Endothelial cell of umbilical vein (primary cell): ENCODE measurements at regions of chr10 and their contacts with region 1.

Region 1: GRCh38 chr10:95693668-95694534 is at the start of gene TCTN3:
- DNase-seq: peak; percentile 100
- H3K4me3 ChIP-seq: peak within 1 kb of the TSS; percentile 48 to 83 (median 68)
- H3K27ac ChIP-seq: peak within 1 kb of the TSS; percentile 26
- H3K4me1 ChIP-seq: peaks cover 13% of the 10 kb centered on the region
- H3K27me3 ChIP-seq: no peaks in the 10 kb centered on the region
- CTCF ChIP-seq: peak; percentile 99 to 100
- POLR2A ChIP-seq: peak; percentile 67
- total RNA-seq, gene TCTN3: 40.4 and 42.9 TPM in 2 replicates

Region 2: GRCh38 chr10:95374597-95375209 is 319.2 kb before region 1 on chr10:
- CTCF ChIA-PET with region 1: interaction called, 20 read pairs
- POLR2A ChIA-PET with region 1: no interaction called
- dilution Hi-C with region 1: no loop called
- intact Hi-C with region 1: loop called (anchors 1 kb)
- DNase-seq: peak; percentile 50
- H3K4me3 ChIP-seq: no peak overlapping the region
- H3K27ac ChIP-seq: no peak overlapping the region
- H3K4me1 ChIP-seq: no peaks in the 10 kb centered on the region
- H3K27me3 ChIP-seq: peaks cover 0 to 7% of the 10 kb centered on the region in 2 experiments
- CTCF ChIP-seq: peak; percentile 83 to 91
- POLR2A ChIP-seq: no peak

Region 3: DNA sequence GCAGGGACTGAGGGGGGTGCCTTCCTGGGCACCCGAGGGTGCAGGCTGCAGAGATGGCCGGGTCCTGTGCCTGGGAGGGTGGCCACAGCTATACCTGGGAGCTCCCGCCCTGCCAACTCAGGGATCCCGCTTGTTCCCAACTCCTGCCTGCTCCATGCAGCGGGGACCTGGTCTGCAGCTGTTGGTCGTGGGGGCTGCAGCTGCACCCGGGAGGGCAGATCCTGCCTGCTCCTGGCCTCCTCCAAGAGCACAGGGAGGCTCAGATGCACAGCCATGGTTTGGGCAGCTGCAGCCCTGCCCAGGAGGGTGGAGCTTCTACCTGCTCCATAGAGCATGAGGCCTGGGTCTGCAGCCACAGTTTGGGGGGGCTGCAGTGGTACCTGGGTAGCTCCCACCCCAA is 13.1 kb after region 1 on chr10:
- CTCF ChIA-PET with region 1: interaction called, 33 read pairs
- POLR2A ChIA-PET with region 1: no interaction called
- dilution Hi-C with region 1: no loop called
- intact Hi-C with region 1: no loop called
- DNase-seq: no peak
- H3K4me3 ChIP-seq: no peak overlapping the region
- H3K27ac ChIP-seq: no peak overlapping the region
- H3K4me1 ChIP-seq: no peaks in the 10 kb centered on the region
- H3K27me3 ChIP-seq: no peaks in the 10 kb centered on the region
- CTCF ChIP-seq: no peak
- POLR2A ChIP-seq: no peak

Region 4: DNA sequence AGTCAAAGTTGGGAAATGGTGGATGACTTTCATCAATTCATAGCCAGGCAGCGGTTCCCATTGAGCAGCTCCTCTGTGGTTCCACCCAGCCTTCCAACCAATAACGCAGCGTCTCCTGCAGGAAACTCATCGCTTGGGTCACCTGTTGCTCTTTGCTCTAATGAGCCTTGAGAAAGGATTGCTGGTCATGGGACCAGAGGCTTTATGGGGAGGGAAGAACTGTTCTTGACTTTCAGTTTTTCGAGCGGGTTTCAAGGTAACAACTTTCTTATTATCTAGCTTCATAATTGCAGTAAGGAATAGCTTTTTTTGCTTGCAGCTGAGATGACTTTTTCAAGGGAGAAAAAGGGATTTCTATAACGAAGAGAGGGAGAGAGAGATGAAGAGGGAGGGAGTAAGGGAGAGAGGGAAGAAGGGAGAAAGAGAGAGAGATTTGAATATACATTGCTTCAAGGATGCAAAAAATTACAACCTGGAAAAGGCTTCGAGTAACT is 61.7 kb after region 1 on chr10:
- CTCF ChIA-PET with region 1: interaction called, 43 read pairs
- POLR2A ChIA-PET with region 1: no interaction called
- dilution Hi-C with region 1: no loop called
- intact Hi-C with region 1: loop called (anchors 2 kb)
- DNase-seq: peak; percentile 55
- H3K4me3 ChIP-seq: peak overlapping the region; percentile 13 to 31 (median 25)
- H3K27ac ChIP-seq: no peak overlapping the region
- H3K4me1 ChIP-seq: peaks cover 24% of the 10 kb centered on the region
- H3K27me3 ChIP-seq: no peaks in the 10 kb centered on the region
- CTCF ChIP-seq: no peak
- POLR2A ChIP-seq: no peak

Region 5: DNA sequence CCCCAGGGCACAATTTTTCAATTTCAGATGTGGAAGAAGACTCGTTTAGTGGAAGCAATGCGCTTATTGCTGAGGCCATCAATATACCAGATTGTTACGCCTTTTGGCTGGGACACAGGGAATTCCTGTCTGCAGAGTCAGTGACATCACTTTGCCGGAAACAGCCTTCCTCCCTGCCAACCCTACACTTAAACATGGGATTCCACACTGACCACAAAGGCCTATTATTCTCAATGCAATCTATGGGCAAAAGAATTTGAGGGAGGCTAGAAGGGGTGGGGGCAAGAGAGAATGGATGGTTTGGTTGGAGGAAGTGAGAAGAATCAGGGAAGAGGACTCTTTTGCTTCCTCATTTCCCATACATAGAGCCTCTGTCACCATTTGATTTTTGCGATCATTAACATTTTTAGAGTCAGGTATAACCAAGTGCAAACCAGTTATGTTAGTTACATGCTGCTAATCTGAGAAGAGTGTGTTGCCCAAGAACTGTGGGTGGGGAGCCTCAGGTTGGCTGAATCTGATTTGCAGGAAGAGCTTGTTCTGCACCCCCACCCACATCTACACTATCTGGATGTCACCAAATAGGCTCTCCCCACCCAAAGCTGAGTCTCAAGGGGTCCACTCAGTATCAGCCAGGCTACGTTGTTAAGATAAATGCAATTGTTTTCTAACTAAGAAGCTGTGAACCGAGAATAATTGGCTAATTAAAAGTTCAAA is 120.3 kb after region 1 on chr10:
- CTCF ChIA-PET with region 1: interaction called, 35 read pairs
- POLR2A ChIA-PET with region 1: no interaction called
- dilution Hi-C with region 1: no loop called
- intact Hi-C with region 1: loop called (anchors 1 kb)
- DNase-seq: peak; percentile 76
- H3K4me3 ChIP-seq: no peak overlapping the region
- H3K27ac ChIP-seq: peak overlapping the region; percentile 41
- H3K4me1 ChIP-seq: peaks cover 46% of the 10 kb centered on the region
- H3K27me3 ChIP-seq: no peaks in the 10 kb centered on the region
- CTCF ChIP-seq: no peak
- POLR2A ChIP-seq: no peak

Region 6: DNA sequence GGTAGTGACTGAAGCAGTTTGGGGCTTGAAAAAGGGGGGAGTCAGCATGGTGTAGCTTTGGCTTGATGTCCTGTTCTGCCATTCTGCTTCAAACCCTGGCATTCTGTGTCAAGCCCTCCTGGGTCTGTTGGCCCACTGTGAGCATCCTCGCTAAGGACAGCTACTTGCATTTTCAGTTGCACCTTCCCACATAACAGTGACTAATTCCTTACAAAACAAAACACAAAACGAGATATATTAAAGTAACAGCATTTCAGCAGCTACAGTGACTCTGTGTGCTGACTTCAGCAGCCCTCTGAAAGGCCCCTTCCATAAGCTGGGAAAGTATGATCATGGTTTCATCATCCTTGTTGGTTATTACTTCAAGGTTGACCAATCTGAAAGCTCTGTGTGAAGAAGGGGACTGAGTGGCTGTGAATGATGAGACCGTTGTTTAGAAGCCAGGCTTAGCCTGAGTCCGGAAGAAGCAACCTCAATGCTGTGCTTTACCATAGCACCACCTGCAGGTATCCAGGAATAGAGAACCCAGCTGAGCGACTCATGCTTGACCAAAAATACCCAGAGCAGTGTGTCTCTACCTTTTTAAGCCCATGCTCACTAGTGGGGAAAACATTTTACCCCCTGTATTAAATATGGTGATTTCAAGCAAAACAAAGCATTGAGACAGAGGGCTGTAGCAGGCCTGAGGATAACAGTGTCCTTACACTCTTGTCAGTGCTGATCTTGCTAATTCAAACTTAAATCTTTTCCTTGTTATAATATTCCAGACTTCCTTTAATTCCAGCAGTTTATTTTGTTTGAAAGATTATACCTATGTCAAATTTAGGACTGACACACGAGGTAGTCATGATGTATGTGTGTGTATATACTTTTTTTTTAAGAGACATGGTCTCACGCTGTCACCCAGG is 171.3 kb after region 1 on chr10:
- CTCF ChIA-PET with region 1: interaction called, 162 read pairs
- POLR2A ChIA-PET with region 1: interaction called, 3 read pairs
- dilution Hi-C with region 1: no loop called
- intact Hi-C with region 1: loop called (anchors 1 kb)
- DNase-seq: peak; percentile 69
- H3K4me3 ChIP-seq: no peak overlapping the region
- H3K27ac ChIP-seq: no peak overlapping the region
- H3K4me1 ChIP-seq: no peaks in the 10 kb centered on the region
- H3K27me3 ChIP-seq: no peaks in the 10 kb centered on the region
- CTCF ChIP-seq: peak; percentile 59 to 73
- POLR2A ChIP-seq: no peak